ENCODE measurements at regions of chr2 and their contacts with region 1.

Region 1: DNA sequence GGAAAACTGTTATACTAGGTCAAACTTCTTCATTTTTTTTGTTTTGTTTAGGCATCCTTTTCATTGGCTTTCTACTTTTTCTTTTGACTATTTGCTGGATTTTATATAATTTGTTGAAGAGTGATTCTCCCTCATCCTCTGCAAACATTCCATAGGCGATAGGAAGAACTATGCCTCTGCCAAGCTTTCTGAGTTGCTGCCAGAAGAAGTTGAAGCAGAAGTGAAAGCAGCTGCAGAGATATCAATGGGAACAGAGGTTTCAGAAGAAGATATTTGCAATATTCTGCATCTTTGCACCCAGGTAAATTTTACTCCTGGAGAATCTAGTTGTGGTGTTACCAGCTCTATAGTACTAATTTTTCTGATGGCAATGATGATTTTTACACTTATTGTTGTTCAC is 25.4 kb downstream of the NOP58 start:
- DNase-seq: peak; percentile 64
- ATAC-seq: no peak
- H3K4me3 ChIP-seq: no peak overlapping the region
- H3K27ac ChIP-seq: peak overlapping the region; percentile 42; the same call in 1 of the 2 replicates
- H3K4me1 ChIP-seq: peaks cover 7% of the 10 kb centered on the region
- H3K27me3 ChIP-seq: no peaks in the 10 kb centered on the region
- CTCF ChIP-seq: no peak
- POLR2A ChIP-seq: no peak
- RAD21 ChIP-seq: no peak

Region 2: DNA sequence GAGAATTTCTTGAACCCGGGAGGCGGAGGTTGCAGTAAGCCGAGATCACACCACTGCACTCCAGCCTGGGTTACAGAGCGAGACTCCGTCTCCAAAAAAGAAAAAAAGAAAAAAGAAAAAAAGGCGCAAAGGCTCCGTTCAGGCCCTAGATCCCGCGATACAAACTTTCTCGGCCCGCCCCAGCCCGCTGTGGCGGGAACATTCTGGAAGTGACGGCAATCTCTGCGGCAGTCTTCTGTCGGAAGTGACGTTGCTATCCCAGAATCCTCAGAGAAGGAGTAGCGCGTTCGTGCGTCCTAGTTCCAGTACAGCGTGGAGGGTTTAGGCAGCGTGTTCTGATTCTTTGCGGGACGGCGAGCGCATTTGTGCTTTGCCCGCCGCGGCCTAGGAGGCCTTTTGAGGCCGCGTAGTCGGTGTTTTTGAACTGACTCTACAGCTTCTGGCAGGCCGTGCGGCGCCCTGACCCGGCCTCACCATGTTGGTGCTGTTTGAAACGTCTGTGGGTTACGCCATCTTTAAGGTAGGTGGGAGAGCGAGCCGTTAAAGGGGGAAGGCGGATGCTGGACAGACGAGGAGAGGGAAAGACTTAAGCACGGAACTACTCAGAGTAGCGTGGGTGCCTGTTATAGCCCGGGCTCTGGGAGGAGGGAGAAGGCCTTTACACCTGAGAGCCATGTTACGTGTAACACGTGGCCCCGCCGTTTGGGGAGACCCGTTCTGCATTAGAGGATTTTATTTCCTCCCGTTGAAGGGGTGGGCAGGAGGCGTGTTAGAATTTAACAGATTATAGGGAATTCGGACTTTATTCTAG is 25.3 kb before region 1 on chr2 and contains the start of gene NOP58:
- CTCF ChIA-PET with region 1: interaction called, 4 read pairs
- POLR2A ChIA-PET with region 1: no interaction called
- dilution Hi-C with region 1: no loop called
- in situ Hi-C with region 1: no loop called
- intact Hi-C with region 1: loop called (anchors 2 kb)
- DNase-seq: peak; percentile 96
- ATAC-seq: peak; percentile 87
- H3K4me3 ChIP-seq: peak within 1 kb of the TSS; percentile 93
- H3K27ac ChIP-seq: peak within 1 kb of the TSS; percentile 89
- H3K4me1 ChIP-seq: peaks cover 2% of the 10 kb centered on the region
- H3K27me3 ChIP-seq: no peaks in the 10 kb centered on the region
- CTCF ChIP-seq: no peak
- POLR2A ChIP-seq: peak; percentile 98
- RAD21 ChIP-seq: no peak
- total RNA-seq, gene NOP58: 45.3 and 117 TPM in 2 replicates

Measured in IMR-90 (cell line).